Thyroid gland (tissue), 4 donors: ENCODE measurements at regions of chr1 and their contacts with region 1.

Region 1: DNA sequence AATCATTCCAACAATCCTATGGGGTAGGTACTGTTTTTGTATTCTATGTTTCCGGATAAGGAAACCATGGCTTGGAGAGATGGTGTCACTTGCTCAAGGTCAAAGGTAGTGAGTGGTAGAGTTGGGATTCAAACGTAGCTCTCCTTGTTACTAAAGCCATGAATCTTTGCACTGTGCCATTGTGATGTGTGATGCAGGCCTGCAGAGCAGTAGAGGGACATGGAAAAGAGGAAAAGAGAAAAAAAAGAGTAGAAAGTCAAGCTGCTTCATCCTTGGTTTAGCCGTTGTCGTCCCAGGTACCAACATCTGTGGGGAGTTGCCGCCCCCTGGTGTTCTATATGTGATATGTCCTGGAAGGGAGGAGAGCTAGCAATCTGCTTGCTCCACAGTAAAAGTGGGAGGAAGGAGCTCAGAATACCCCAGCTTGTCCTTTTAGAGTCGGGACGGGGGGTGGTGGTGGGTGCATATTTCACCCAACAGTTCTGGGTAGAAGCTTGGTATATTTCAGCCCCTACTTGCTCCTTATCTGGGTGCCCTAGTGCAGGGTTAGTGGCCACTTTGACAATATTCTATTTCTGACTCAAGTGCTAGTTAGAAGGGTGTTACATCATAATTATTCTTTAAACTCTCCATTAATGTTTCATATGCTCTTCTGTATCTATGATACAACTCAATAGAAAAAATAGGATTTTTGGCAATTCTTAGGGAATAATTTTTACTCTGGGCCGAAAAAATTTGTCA is 98.4 kb downstream of the EBNA1BP2 start:
- DNase-seq: peak; percentile 74 to 80
- H3K4me3 ChIP-seq: no peak overlapping the region
- H3K27ac ChIP-seq: no peak overlapping the region
- H3K4me1 ChIP-seq: peaks cover 3 to 7% of the 10 kb centered on the region in 2 donors
- H3K27me3 ChIP-seq: no peaks in the 10 kb centered on the region
- CTCF ChIP-seq: peak; percentile 48 to 96 (median 76)
- POLR2A ChIP-seq: no peak

Region 2: DNA sequence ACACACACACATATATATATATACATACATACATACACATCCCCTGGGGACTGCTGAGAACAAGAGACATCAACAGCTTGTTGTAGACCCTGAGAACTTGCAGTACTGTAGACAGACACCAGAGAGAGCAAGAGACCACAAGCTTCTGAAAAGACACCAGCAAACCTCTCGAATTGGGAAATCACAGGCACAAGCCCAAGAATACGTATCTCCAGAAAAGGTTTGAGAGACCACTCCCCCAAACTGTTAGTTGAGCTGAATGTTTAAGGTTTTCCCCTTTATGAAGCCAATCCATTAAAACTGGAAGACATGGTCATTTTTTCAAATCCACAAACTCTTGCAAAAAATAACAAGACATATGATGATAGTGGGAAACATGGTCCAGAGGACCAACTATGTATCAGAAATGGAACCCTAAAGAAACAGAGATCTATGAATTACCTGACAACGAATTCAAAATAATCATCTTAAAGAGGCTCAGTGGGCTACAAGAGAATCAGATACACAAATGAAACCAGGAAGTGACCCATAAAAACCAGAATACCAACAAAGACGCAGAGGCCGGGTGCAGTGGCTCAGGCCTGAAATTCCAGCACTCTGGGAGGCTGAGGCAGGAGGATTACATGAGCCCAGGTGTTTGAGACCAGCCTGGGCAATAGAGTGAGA is 160.1 kb before region 1 on chr1:
- intact Hi-C with region 1: loop called (anchors 5 kb)
- DNase-seq: peak; percentile 60 to 63
- H3K4me3 ChIP-seq: no peak overlapping the region
- H3K27ac ChIP-seq: no peak overlapping the region
- H3K4me1 ChIP-seq: no peaks in the 10 kb centered on the region
- H3K27me3 ChIP-seq: no peaks in the 10 kb centered on the region
- CTCF ChIP-seq: peak; percentile 40 to 97 (median 88)
- POLR2A ChIP-seq: no peak

Region 3: DNA sequence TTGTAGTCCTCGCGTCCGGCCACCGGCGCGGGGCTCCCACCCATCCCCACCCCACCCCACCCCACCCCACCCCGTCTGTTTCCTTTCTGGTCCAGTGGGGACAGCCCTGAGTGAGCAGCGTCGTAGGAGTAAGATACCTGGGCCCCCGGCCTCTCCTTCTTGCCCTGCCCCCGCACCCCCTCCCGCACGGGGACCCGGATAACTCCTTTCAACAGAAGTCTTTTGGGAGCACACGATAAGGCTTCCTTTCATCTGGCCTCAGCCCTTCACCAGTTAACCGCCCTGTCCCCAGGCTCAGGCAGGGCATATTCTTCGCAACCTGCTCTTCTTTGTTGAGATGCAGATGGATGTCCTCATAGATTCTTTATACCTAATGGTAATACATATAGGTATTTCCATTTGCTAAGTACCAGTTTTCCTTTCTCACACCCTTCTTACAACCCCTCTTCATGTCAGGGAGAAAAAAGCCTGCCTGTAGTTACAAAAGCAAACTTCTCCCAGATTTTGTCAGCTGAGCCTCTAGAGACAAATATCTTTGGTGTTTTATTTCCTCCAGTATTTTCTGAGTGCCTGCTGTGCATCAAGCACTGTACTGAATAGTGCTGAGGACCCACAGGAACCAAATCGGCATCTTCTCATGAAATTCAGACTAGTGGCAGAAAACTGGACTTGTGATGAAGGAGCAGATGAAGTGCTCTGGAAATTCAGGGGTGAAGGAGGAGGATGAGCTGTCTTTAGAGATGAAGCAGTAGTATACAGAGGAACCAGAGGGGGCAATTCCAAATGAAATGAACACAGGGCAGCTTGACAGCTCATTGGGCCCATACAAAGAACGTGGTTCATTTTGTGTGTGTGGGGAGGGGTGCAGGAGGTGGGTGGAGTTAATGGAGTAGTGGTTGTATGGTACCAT is 148.6 kb before region 1 on chr1:
- intact Hi-C with region 1: loop called (anchors 5 kb)
- DNase-seq: no peak
- H3K4me3 ChIP-seq: peak overlapping the region in 2 of 3 donors; percentile 43 to 97
- H3K27ac ChIP-seq: peak overlapping the region; percentile 84 to 98 (median 90)
- H3K4me1 ChIP-seq: peaks cover 4 to 7% of the 10 kb centered on the region in 2 donors
- H3K27me3 ChIP-seq: no peaks in the 10 kb centered on the region
- CTCF ChIP-seq: no peak
- POLR2A ChIP-seq: no peak

Region 4: GRCh38 chr1:43143441-43143888 is 69.8 kb after region 1 on chr1:
- intact Hi-C with region 1: no loop called
- DNase-seq: no peak
- H3K4me3 ChIP-seq: no peak overlapping the region
- H3K27ac ChIP-seq: no peak overlapping the region
- H3K4me1 ChIP-seq: peaks cover 0 to 4% of the 10 kb centered on the region in 2 donors
- H3K27me3 ChIP-seq: no peaks in the 10 kb centered on the region
- CTCF ChIP-seq: no peak
- POLR2A ChIP-seq: no peak

Region 5: DNA sequence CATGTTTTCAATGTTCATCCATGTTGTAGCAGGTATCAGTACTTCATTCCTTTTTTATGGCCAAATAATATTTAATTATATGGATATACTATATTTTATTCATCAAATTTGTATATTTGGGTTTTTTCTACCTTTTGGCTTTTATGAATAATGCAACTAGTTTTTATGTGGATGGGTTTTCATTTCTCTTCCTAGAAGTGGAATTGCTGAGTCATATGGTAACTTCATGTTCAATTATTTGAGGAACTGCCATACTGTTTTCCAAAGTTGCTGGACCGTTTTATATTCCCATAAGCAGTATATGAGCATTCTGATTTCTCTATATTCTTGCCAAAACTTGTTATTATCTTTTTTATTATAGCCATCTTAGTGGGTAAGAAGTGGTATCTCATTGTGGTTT is 114.4 kb after region 1 on chr1:
- intact Hi-C with region 1: no loop called
- DNase-seq: no peak
- H3K4me3 ChIP-seq: no peak overlapping the region
- H3K27ac ChIP-seq: no peak overlapping the region
- H3K4me1 ChIP-seq: no peaks in the 10 kb centered on the region
- H3K27me3 ChIP-seq: no peaks in the 10 kb centered on the region
- CTCF ChIP-seq: no peak
- POLR2A ChIP-seq: no peak